ENCODE measurements at regions of chr16 and their contacts with region 1.

Region 1: DNA sequence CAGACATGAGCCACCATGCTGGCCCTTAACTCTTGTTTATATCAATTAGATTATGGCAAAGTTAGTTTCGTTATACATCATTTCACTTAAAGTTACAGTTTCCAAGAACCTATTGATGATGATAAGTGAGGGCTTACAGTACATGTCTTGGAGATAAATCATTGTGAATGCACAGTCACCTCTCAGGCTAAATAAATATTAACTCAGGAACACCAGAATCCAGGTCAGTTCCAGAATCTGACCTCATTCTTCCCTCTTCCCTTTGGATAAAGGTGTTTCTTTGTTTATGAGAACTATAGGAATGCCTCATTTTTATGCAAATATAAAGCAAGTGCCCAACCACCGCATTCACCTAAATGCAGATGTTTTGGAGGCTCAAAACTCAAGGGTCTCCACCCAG is 48.4 kb upstream of the CRYM start:
- DNase-seq: no peak

Region 2: DNA sequence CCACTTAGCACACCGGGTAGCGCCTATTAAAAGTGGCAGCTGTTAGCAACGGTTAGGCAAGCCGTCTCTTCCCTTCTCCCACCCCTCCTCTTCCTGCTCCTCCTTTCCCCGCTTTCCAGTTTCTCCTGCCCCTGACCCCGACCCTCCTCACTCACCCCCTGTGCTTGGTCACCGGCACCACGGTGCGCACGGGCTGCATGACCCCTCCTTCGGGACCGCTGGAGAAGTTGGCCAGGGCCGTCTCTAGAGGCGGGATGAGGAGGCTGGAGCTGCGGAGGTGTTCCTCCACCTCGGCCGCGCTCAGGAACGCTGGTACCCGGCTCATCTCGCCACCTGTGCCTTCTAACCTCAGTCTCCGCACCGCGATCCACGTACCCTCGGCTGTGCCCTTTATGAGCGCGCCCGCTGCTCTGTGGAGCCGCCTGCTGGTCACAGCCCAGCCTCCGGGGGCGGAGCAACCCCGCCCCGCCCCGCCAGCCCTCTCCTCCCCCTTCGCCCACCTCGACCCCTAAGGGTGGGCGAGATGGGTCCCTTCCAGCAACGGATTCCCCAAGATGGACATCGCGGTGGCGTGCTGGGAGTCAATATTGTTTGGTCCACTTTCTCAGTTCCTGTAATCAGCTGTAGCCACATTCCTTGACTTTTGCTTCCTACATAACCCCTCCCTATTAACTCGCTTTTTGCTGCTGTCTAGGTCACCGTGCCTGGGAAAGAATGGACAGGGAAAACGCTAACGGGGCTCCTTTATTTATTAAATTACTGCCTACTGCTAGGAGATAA is 48.3 kb before region 1 on chr16 and contains the start of gene CRYM:
- intact Hi-C with region 1: loop called (anchors 10 kb)
- DNase-seq: peak in 41 of 42 donors; percentile 41 to 86 (median 71)